HEK293 (cell line): ENCODE measurements at regions of chr10 and their contacts with region 1.

Region 1: DNA sequence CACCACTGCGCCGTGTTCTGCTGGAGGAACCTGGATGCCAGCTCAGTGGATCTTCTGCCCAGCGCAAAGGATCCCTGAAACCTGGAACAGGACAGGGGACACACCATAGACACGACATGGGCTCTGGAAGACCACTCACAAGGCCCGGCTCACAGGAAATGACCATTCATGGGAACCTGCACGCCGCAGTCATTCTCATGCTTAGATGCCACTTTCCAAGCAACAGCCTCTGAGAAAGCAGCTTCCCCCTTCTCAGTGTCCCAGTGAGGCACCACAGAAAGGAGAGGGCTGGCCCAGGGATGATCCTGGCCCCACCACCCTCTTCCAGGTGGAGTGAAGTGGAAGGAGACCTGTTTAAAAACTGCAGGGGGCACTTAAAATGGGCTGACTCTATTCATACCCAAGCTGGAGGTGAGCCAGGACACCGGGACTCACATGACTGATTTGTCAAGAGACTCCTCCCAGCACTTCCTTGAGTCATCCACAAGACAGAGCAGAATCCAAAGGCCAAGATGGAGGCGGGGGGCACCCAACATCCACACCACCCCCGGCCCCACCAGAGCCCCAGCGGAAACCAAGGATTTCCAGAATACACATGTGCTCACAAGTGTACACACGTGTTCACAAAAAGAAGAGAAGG is 11.2 kb downstream of the CTBP2 start:
- H3K4me3 ChIP-seq: no peak overlapping the region
- H3K27ac ChIP-seq: peak overlapping the region; percentile 34; the same call in 1 of the 2 replicates
- H3K4me1 ChIP-seq: peaks cover 57% of the 10 kb centered on the region
- CTCF ChIP-seq: no peak

Region 2: DNA sequence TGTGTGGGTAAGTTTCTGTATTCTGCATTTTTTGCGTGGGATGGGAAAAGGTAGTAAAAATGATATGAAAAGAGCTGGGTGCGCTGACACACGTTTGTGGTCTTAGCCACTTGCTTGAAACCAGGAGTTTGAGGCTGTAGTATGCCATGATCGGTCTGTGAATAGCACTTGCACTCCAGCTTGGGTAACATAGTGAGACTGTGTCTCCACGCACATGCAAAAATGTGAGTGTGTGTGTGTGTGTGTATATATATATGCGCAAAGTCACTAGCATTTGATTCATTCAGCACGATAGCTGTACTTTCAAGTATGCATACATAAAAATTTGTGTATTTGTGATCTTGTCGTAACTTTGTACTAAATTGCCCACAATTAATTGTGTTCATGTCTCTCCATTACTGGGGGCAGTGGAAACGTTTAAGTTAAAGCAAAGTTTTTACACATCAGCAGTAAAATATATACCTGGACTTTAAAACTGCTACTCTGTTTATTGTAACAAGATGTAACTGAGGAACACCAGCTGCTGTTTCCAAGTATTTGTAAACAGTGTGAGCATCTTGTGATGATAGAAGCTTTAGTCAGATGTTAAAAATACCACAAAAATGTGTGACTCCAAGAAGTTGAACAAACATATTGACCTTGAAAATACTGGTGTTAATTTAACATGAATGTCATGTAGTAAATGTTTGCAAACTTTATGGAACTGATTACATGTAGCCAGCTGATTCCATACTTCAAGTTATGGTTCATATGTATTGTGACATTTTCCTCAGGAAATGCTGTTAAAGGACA is 205.7 kb before region 1 on chr10:
- CTCF ChIA-PET with region 1: no interaction called
- POLR2A ChIA-PET with region 1: no interaction called
- H3K4me3 ChIP-seq: no peak overlapping the region
- H3K27ac ChIP-seq: no peak overlapping the region
- H3K4me1 ChIP-seq: peaks cover 19% of the 10 kb centered on the region
- CTCF ChIP-seq: no peak

Region 3: DNA sequence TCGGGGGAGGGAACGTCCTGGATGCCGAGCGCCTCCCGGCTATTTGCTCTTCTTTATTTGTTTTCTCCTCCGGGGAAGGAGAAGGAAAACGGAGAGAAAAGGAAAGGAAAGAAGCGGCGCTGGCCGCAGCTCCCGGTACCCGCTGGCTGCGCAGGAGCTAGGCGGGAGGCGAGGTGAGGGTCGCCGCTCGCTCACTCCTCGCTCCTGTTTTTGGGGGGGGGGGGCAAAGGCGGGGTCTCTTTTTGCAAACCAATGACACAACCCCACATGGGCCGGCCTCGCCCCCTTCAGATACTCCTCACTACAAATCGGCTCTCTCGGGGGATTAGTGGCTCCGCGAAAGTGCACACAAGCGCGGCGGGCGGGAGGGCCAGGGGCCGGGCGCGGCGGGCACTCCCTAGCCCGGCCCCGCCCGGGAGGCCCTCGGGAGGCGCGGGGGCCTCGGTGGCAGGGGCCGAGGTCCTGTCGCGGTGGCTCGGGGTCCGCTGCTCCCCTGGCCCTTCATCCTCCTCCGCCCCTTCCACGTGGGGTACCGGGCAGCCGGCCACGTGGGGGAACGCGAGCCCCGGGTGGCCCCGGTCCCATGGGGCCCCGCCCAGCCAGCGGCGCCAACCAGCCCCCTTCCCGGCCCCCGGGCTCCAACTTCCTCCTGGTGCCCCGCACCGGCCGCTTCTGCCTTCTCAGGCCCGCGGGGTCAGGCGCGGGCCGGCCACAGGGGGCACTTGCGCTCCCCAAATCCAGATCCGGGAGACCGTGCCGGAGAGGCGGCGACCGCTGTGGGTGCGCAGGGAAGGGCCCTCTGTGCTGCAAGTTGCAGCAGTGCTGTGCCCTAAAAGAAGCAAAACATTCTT is 11.9 kb after region 1 on chr10:
- CTCF ChIA-PET with region 1: no interaction called
- POLR2A ChIA-PET with region 1: interaction called, 14 read pairs
- H3K4me3 ChIP-seq: peak overlapping the region; percentile 61
- H3K27ac ChIP-seq: peak overlapping the region; percentile 97
- H3K4me1 ChIP-seq: peaks cover 18% of the 10 kb centered on the region
- CTCF ChIP-seq: peak; percentile 78

Region 4: DNA sequence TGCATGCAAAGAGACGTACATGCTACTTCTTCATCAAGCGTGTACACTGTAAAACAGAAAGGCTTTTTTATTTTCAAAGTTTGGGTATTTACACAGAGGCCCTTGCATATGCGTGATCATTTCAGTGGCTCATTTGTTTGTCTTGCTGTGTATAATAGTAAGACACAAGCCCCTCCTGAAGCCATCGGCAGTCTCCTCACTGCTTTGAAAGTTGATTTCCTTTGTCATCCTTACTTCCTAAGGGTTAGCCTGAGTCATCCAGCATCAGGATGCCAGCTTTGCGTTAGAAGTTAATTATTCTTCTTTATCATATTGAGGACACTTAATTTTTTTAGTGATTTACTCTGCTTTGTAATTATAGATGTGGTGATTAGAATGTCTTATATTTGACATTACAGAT is 83.7 kb after region 1 on chr10:
- CTCF ChIA-PET with region 1: no interaction called
- POLR2A ChIA-PET with region 1: no interaction called
- H3K4me3 ChIP-seq: no peak overlapping the region
- H3K27ac ChIP-seq: no peak overlapping the region
- H3K4me1 ChIP-seq: no peaks in the 10 kb centered on the region
- CTCF ChIP-seq: no peak